ENCODE measurements at regions of chr19 and their contacts with region 1.

Region 1: DNA sequence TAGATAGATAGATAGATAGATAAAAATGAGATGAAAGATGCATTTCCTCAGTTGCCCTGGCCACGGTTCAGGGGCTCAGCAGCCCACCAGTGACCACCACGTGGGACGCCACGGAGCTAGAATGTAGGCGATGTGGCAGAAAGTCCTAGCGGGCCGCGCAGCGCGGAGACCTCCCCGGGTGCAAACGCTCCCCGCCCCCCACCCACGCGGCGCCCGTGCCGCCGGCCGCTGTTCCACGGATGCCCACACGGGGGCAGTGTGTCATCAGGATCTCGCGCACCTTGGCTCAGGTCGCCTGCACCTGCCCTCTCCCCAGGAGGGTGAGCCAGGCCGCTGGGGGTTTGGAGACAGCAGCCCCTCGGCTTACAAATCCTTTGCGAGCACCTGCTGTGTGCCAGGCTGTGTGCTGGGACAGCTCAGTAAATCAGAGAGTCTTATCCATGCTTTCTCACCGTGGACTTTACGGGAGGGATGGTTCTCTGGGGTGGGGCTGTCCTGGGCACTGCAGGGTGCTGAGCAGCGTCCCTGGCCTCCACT is 13.7 kb upstream of the TLE5 start:
- DNase-seq: peak; percentile 86
- ATAC-seq: peak; percentile 88
- H3K4me3 Mint-ChIP-seq: no peak overlapping the region
- H3K27ac Mint-ChIP-seq: no peak overlapping the region
- H3K4me1 Mint-ChIP-seq: peaks cover 4% of the 10 kb centered on the region
- H3K27me3 Mint-ChIP-seq: no peaks in the 10 kb centered on the region

Region 2: DNA sequence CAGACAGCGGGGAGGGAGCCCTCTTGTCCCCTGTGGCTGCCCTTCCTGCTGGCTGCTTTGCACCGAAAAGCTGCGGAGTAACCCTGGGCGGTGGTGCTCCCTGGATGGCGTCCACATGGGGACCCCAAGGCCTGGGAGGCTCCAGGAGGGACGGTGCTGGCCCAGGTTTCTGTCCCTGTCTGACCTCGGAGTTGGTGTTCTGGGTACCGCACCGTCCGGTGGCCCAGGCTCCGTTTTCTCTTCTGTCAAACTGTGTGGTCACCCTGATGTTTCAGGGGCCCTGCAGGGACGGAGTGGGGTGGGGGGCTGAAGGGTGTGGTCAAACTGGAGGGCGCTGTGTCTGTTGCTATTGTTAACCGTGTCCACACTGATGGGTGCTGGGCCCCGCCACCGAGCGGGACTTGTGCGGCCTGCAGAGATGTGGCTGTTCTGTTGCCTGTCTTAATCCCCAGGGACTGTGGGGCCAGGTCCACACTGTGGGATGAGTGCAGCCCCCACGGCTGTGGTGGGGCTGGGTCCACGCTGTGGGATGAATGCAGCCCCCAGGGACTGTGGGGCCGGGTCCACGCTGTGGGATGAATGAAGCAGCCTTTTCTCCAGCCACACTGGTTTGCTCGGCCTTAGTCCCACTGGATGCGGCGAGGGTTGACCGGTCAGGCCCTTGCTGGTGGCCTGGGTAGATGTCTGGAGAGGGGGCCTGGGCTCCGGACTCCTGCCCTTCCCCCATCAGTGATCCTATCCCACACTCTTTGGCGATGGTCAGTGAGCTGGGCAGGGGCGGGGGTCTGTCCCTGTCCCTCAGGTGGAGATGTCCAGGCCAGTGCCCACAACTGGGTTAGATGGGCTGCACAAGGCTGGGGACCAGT is 25.1 kb after region 1 on chr19:
- CTCF ChIA-PET with region 1: interaction called, 20 read pairs
- POLR2A ChIA-PET with region 1: no interaction called
- intact Hi-C with region 1: loop called (anchors 1 kb)
- DNase-seq: no peak
- ATAC-seq: no peak
- H3K4me3 Mint-ChIP-seq: no peak overlapping the region
- H3K27ac Mint-ChIP-seq: no peak overlapping the region
- H3K4me1 Mint-ChIP-seq: peaks cover 23% of the 10 kb centered on the region
- H3K27me3 Mint-ChIP-seq: no peaks in the 10 kb centered on the region

Region 3: GRCh38 chr19:3125900-3126524 is 50.0 kb after region 1 on chr19:
- CTCF ChIA-PET with region 1: interaction called, 4 read pairs
- POLR2A ChIA-PET with region 1: no interaction called
- intact Hi-C with region 1: loop called in 1 of 2 experiments (anchors 1 kb)
- DNase-seq: peak; percentile 93
- ATAC-seq: peak; percentile 97
- H3K4me3 Mint-ChIP-seq: no peak overlapping the region
- H3K27ac Mint-ChIP-seq: no peak overlapping the region
- H3K4me1 Mint-ChIP-seq: peaks cover 4% of the 10 kb centered on the region
- H3K27me3 Mint-ChIP-seq: no peaks in the 10 kb centered on the region

Region 4: DNA sequence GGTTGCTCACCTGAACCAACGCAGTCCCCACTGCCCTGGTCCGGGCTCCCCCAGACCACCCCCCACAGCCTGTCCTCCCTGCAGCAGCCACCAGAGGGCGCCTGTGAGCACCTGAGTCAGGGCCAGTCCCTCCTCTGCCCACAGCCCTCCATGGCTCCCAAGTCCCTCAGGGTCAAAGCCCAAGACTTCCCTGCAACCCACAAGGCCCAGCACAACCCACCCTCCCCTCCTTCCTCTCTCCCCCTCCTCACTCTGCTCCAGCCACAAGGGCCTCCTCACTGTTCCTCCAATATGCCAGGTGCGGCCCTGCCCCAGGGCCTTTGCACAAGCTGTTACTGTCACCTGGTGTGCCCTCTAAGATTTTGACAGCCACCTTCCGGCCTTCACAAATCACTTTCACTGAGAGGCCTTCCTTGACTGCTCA is 70.7 kb after region 1 on chr19:
- CTCF ChIA-PET with region 1: no interaction called
- POLR2A ChIA-PET with region 1: no interaction called
- intact Hi-C with region 1: no loop called
- DNase-seq: peak; percentile 83
- ATAC-seq: peak; percentile 55
- H3K4me3 Mint-ChIP-seq: no peak overlapping the region
- H3K27ac Mint-ChIP-seq: no peak overlapping the region
- H3K4me1 Mint-ChIP-seq: peaks cover 20% of the 10 kb centered on the region
- H3K27me3 Mint-ChIP-seq: no peaks in the 10 kb centered on the region

Region 5: GRCh38 chr19:3210347-3211017 is 134.5 kb after region 1 on chr19:
- CTCF ChIA-PET with region 1: interaction called, 4 read pairs
- POLR2A ChIA-PET with region 1: no interaction called
- intact Hi-C with region 1: loop called in 1 of 2 experiments (anchors 1 kb)
- DNase-seq: peak; percentile 86
- ATAC-seq: peak; percentile 98
- H3K4me3 Mint-ChIP-seq: no peak overlapping the region
- H3K27ac Mint-ChIP-seq: no peak overlapping the region
- H3K4me1 Mint-ChIP-seq: no peaks in the 10 kb centered on the region
- H3K27me3 Mint-ChIP-seq: no peaks in the 10 kb centered on the region